ENCODE measurements at regions of chr19 and their contacts with region 1.

Region 1: GRCh38 chr19:38263689-38264485 is 486 bp upstream of the SPINT2 start:
- H3K4me3 ChIP-seq: peak overlapping the region; percentile 52
- H3K27ac ChIP-seq: peak overlapping the region; percentile 90
- H3K4me1 ChIP-seq: peaks cover 44% of the 10 kb centered on the region
- CTCF ChIP-seq: no peak

Region 2: DNA sequence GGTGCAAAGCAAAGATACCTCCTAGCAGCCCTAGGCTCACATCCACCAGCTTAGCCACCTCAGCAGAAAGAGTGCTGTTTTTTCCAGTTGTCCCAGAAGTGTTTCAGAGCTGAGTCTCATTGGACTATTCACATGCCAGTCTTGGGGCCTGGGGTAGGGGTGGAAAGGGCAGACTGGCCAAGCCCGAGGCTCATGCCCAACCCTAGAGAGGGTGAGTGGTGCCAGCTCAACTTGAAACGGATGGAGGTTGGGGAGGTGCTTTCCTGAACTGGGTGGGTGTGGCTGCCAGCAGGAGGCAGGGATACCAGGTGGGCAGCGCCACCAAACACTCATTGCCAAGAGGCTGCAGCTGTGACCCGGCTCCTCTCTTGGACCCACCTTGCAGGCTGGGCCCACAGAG is 156.8 kb before region 1 on chr19:
- CTCF ChIA-PET with region 1: no interaction called
- POLR2A ChIA-PET with region 1: no interaction called
- H3K4me3 ChIP-seq: no peak overlapping the region
- H3K27ac ChIP-seq: no peak overlapping the region
- H3K4me1 ChIP-seq: no peaks in the 10 kb centered on the region
- CTCF ChIP-seq: no peak

Region 3: GRCh38 chr19:38229585-38230073 is 34.3 kb before region 1 on chr19:
- CTCF ChIA-PET with region 1: interaction called, 39 read pairs
- POLR2A ChIA-PET with region 1: interaction called, 3 read pairs
- H3K4me3 ChIP-seq: peak overlapping the region; percentile 40
- H3K27ac ChIP-seq: no peak overlapping the region
- H3K4me1 ChIP-seq: peaks cover 10% of the 10 kb centered on the region
- CTCF ChIP-seq: peak; percentile 51

Region 4: DNA sequence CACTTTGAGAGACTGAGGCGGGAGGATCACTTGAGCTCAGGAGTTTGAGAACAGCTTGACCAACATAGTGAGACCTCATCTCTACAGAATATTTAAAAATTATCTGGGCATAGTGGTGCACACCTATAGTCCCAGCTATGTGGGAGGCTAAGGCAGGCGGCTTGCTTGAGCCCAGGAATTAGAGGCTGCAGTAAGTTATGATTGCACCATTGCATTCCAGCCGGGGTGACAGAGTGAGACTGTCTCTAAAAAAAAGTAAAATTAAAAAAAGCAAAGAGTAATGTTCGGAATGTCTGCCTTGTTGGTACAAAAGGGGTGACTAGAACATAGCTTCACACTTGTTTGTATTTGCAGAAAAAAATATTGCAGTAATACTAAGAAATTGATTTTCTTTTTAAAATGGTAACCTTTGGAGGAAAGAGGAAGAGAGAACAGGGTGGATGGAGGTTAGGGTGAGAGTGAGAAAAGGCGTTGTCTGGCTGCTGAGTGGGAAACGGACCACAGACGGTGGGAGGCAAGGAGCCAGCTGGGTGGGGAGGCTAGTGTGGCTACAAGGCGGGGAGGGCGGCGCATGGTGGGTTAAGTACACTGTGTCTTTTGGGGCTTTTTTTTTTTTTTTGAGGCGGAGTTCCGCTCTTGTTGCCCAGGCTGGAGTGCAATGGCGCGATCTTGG is 17.9 kb before region 1 on chr19:
- CTCF ChIA-PET with region 1: interaction called, 48 read pairs
- POLR2A ChIA-PET with region 1: interaction called, 8 read pairs
- H3K4me3 ChIP-seq: no peak overlapping the region
- H3K27ac ChIP-seq: no peak overlapping the region
- H3K4me1 ChIP-seq: peaks cover 6% of the 10 kb centered on the region; the same call in 1 of the 2 replicates
- CTCF ChIP-seq: no peak

Region 5: GRCh38 chr19:38250821-38251563 is 12.9 kb before region 1 on chr19:
- CTCF ChIA-PET with region 1: interaction called, 24 read pairs
- POLR2A ChIA-PET with region 1: interaction called, 8 read pairs
- H3K4me3 ChIP-seq: no peak overlapping the region
- H3K27ac ChIP-seq: no peak overlapping the region
- H3K4me1 ChIP-seq: peaks cover 19% of the 10 kb centered on the region
- CTCF ChIP-seq: no peak

Region 6: GRCh38 chr19:38277969-38278680 is 14.2 kb after region 1 on chr19:
- CTCF ChIA-PET with region 1: interaction called, 6 read pairs
- POLR2A ChIA-PET with region 1: interaction called, 26 read pairs
- H3K4me3 ChIP-seq: no peak overlapping the region
- H3K27ac ChIP-seq: peak overlapping the region; percentile 50; the same call in 1 of the 2 replicates
- H3K4me1 ChIP-seq: peaks cover 13% of the 10 kb centered on the region
- CTCF ChIP-seq: no peak

Region 7: DNA sequence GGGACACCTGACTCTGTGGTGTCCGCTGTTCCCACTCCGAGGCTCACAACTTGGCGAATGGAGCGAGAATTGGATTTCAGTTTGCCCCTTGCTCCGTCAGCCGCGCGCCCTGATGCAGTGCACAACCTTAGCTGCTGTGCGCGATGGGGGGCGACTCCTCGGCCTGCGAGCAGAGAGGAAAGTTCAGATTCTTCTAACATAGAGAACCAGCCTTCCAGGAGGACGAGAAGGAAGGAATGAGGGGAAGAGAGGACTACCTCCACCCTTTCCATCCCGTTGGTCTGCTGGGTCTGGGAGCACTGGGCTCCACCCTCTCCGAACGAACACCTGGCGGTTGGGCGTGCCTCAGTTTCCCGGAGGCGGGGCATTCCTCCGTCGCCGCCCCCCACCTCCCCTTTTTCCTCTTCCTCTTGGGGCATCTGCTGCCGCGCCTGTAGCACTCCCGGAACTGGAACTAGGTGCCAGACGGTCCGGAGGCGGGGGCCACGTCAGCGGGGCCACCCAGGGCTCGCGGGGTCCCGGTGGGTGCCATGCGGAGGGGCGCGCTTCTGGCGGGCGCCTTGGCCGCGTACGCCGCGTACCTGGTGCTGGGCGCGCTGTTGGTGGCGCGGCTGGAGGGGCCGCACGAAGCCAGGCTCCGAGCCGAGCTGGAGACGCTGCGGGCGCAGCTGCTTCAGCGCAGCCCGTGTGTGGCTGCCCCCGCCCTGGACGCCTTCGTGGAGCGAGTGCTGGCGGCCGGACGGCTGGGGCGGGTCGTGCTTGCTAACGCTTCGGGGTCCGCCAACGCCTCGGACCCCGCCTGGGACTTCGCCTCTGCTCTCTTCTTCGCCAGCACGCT is 55.8 kb after region 1 on chr19 and contains the start of gene KCNK6:
- CTCF ChIA-PET with region 1: interaction called, 3 read pairs
- POLR2A ChIA-PET with region 1: interaction called, 11 read pairs
- H3K4me3 ChIP-seq: peak within 1 kb of the TSS; percentile 27
- H3K27ac ChIP-seq: peak within 1 kb of the TSS; percentile 51; the same call in 1 of the 2 replicates
- H3K4me1 ChIP-seq: peaks cover 12% of the 10 kb centered on the region
- CTCF ChIP-seq: peak; percentile 6; the same call in 1 of the 2 replicates

Region 8: GRCh38 chr19:38387550-38388348 is 123.9 kb after region 1 on chr19 and contains the start of gene GGN:
- CTCF ChIA-PET with region 1: no interaction called
- POLR2A ChIA-PET with region 1: interaction called, 24 read pairs
- H3K4me3 ChIP-seq: peak within 1 kb of the TSS; percentile 56
- H3K27ac ChIP-seq: peak within 1 kb of the TSS; percentile 63
- H3K4me1 ChIP-seq: peaks cover 19% of the 10 kb centered on the region
- CTCF ChIP-seq: no peak

Region 9: GRCh38 chr19:38425810-38426466 is 162.1 kb after region 1 on chr19 and contains the start of gene RASGRP4:
- CTCF ChIA-PET with region 1: no interaction called
- POLR2A ChIA-PET with region 1: no interaction called
- H3K4me3 ChIP-seq: no peak within 1 kb of the TSS
- H3K27ac ChIP-seq: no peak within 1 kb of the TSS
- H3K4me1 ChIP-seq: no peaks in the 10 kb centered on the region
- CTCF ChIP-seq: no peak

Measured in HEK293 (cell line).